Heart right ventricle (tissue), 16 donors: ENCODE measurements at regions of chr20 and their contacts with region 1.

Region 1: DNA sequence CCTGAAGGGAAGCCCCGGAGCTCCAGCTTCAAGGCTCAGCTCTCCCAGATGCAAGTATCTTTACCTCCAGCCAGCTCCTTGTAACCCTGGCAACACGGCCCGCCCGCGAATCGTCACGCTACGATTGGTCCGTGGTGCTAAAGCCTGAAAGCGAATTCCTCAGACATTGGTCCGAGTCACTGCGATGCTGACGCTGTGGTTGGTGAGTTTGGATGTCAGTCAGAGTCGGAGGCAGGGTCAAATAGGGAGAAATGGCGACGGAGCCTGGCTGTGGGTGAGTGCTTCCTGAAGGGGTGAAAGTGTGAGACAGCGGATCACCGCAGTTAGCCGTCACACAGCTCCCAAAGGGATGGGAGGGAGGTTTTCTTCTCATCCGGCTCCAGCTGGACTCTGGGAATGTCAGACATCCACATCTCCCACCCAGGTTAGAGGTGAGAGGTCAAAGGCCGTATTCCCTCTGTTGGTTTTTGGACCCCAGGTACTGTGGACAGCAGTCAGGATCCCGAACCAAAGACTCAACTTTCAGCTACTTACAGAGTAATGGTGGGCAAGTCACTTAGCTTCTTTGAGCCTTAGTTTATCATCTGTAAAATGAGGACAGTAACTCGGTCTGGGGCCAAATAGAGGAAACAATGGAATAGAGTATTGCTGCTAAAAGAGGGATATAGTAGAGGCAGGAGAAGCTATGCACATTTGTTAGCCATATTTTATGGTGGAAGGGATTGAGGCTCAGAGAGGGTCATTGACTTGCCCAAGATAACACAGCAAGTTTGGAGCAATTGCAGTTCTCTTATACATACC is at the start of gene ZSWIM1:
- DNase-seq: peak; percentile 99
- ATAC-seq: peak; percentile 95 to 99 (median 98)
- H3K4me3 ChIP-seq: peak within 1 kb of the TSS; percentile 57 to 79 (median 68)
- H3K27ac ChIP-seq: peak within 1 kb of the TSS; percentile 47 to 90 (median 83)
- H3K4me1 ChIP-seq: peaks cover 0 to 31% (median 21%) of the 10 kb centered on the region in 9 donors
- H3K27me3 ChIP-seq: no peaks in the 10 kb centered on the region
- CTCF ChIP-seq: no peak
- total RNA-seq, gene ZSWIM1: 9.2 to 12.0 (median 10.4) TPM

Region 2: DNA sequence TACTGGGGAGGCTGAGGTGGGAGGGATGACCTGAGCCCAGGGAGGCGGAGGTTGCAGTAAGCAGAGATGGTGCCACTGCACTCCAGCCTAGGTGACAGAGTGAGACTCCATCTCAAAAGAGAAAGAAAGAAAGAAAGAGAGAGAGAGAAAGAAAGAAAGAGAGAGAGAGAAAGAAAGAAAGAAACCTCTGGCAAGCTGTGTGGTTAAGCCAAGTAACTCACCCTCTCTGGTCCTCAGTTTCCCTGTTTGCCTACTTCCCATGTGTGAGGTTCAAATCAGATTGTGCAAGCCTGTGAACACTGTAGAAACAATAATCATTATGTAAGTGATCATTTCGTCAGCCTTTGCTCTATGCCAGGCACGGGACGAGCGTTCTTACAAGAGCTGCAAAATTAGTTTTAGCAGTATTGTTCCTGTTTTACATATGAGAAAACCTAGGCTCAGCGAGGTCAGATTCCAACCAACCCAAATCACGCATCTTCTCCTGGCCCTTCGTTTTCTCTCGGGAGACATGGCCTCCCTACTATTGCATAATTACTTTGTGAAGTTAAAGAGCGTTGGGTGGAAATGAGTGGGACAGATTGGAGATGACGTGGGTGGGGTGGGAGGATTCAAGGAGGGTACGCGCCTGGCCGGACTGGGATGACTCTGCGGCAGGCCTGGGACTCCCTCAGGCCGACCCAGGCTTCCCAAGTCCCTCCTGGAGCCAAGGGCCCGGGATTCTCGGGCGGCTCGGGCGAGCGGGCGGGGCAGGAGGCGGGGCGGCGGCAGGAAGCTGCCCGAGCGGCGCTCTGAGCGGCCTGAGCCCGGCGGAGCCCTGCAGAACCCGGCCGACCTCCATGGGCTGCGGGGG is 47.9 kb before region 1 on chr20 and contains the start of gene SNX21:
- intact Hi-C with region 1: loop called in 1 of 10 experiments (anchors 10 kb)
- DNase-seq: peak; percentile 89 to 92
- ATAC-seq: peak; percentile 88 to 92 (median 89)
- H3K4me3 ChIP-seq: peak within 1 kb of the TSS; percentile 49 to 90 (median 75)
- H3K27ac ChIP-seq: peak within 1 kb of the TSS; percentile 78 to 99 (median 95)
- H3K4me1 ChIP-seq: peaks cover 7 to 59% (median 39%) of the 10 kb centered on the region in 9 donors
- H3K27me3 ChIP-seq: no peaks in the 10 kb centered on the region
- CTCF ChIP-seq: no peak
- total RNA-seq, gene SNX21: 15.4 to 27.0 (median 19.3) TPM

Region 3: DNA sequence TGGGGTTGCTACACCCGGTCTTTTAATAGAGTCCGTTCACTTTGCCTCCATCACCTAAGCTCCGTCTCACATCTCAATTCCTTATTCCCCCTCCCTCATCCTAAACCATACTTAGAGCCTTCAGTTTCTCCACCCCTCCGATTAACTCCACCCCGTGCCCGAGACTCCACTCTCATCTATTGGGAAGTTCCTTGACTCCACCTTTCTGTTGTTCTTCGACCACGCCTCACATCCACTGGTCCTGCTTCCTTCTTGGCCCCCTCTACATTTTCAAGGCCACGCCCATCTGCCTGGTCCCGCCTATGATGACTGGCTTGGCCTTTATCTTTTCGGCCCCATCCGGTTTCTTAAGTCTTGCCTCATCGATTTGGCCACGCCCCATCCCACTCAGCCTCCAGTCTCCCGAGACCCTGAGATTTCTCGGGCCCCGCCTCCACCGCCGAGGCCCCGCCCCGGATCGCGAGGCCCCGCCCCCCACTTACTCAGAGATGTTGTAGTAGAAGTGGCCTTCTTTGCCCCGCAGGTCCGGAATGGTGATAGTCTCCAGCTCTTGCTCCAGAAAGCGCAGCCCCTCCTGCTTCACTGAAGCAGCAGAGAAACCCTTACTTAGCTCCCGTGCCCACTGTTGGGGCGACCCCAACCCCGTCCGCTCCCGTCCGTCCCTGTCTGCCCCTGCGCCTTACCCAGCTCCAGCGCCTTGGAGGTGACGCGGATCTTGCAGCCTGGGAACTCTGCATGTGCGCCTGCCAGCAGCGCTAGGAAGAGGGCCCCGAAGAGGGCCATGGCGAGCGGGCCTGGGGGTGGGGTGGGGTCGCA is 29.7 kb after region 1 on chr20:
- intact Hi-C with region 1: no loop called
- DNase-seq: peak; percentile 95 to 97
- ATAC-seq: peak; percentile 87 to 95 (median 91)
- H3K4me3 ChIP-seq: peak overlapping the region; percentile 33 to 64 (median 58)
- H3K27ac ChIP-seq: peak overlapping the region; percentile 19 to 84 (median 80)
- H3K4me1 ChIP-seq: peaks cover 6 to 59% (median 27%) of the 10 kb centered on the region in 9 donors
- H3K27me3 ChIP-seq: peaks cover 0 to 11% (median 0%) of the 10 kb centered on the region in 7 donors
- CTCF ChIP-seq: no peak

Region 4: GRCh38 chr20:45946149-45946970 is 65.2 kb after region 1 on chr20:
- intact Hi-C with region 1: loop called in 1 of 10 experiments (anchors 10 kb)
- DNase-seq: no peak
- ATAC-seq: peak in 7 of 8 donors; percentile 6 to 66 (median 18)
- H3K4me3 ChIP-seq: no peak overlapping the region
- H3K27ac ChIP-seq: peak overlapping the region in 2 of 10 donors; percentile 19 to 70
- H3K4me1 ChIP-seq: peaks cover 0 to 38% (median 0%) of the 10 kb centered on the region in 9 donors
- H3K27me3 ChIP-seq: no peaks in the 10 kb centered on the region
- CTCF ChIP-seq: no peak

Region 5: GRCh38 chr20:46512943-46513844 is 632.0 kb after region 1 on chr20 and contains the start of gene ZNF334:
- intact Hi-C with region 1: no loop called
- DNase-seq: peak; percentile 60 to 77
- ATAC-seq: peak; percentile 93 to 99 (median 97)
- H3K4me3 ChIP-seq: peak within 1 kb of the TSS; percentile 60 to 92 (median 74)
- H3K27ac ChIP-seq: peak within 1 kb of the TSS in 9 of 10 donors; percentile 8 to 91 (median 70)
- H3K4me1 ChIP-seq: peaks cover 0 to 13% (median 9%) of the 10 kb centered on the region in 9 donors
- H3K27me3 ChIP-seq: peaks cover 0 to 32% (median 15%) of the 10 kb centered on the region in 7 donors
- CTCF ChIP-seq: peak in 1 of 9 donors; percentile 11
- total RNA-seq, gene ZNF334: 0.70 to 3.0 (median 1.6) TPM